Mammary epithelial cell (primary cell): ENCODE measurements at regions of chr22 and their contacts with region 1.

Region 1: GRCh38 chr22:41403532-41404318 is 22.0 kb downstream of the TEF start:
- DNase-seq: peak; percentile 81
- H3K4me3 ChIP-seq: no peak overlapping the region
- H3K27ac ChIP-seq: no peak overlapping the region
- H3K4me1 ChIP-seq: peaks cover 5% of the 10 kb centered on the region
- H3K27me3 ChIP-seq: no peaks in the 10 kb centered on the region
- CTCF ChIP-seq: peak; percentile 94 to 96

Region 2: DNA sequence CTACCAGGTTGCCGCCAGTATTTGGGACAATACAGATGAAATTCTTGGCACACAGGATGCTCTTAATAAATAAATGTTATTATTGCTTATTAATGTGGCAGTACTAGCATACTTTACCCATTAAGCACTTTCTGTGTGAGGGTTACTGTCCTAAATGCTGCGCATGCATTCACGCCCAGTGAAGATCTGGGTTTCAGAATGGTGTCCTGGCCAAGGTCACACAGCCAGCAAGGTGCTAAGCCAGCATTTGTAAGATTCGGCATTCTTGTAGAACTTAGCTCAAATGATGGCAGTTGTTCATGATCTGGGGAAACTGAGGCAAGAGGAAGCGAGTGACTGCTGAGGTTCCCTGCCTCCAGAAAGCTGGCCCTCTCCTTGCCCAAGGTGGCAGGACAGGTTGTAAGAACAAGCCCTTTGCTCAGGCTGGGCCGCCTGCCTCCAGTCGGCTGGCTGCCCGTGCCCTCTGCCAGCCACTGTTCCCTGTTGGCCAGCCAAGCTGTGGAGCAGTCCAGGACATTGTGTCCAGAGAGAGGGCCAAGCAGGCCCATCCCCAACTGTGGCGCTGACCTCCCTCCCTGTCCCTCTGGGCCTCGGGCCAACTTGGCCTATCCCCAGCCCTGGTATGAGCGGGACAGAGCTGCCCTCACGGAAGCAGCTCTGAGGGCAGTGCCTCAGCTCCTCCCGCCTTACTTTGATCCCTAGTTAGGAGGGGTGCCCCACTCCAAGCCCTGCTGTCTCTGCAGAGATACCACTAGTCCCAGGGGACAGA is 14.1 kb after region 1 on chr22:
- CTCF ChIA-PET with region 1: no interaction called
- dilution Hi-C with region 1: no loop called
- in situ Hi-C with region 1: no loop called
- intact Hi-C with region 1: no loop called
- DNase-seq: no peak
- H3K4me3 ChIP-seq: no peak overlapping the region
- H3K27ac ChIP-seq: no peak overlapping the region
- H3K4me1 ChIP-seq: peaks cover 15% of the 10 kb centered on the region
- H3K27me3 ChIP-seq: no peaks in the 10 kb centered on the region
- CTCF ChIP-seq: no peak

Region 3: GRCh38 chr22:41458161-41458728 is 54.5 kb after region 1 on chr22:
- CTCF ChIA-PET with region 1: no interaction called
- dilution Hi-C with region 1: no loop called
- in situ Hi-C with region 1: no loop called
- intact Hi-C with region 1: no loop called
- DNase-seq: no peak
- H3K4me3 ChIP-seq: no peak overlapping the region
- H3K27ac ChIP-seq: no peak overlapping the region
- H3K4me1 ChIP-seq: no peaks in the 10 kb centered on the region
- H3K27me3 ChIP-seq: no peaks in the 10 kb centered on the region
- CTCF ChIP-seq: no peak

Region 4: GRCh38 chr22:41501209-41501608 is 97.5 kb after region 1 on chr22:
- CTCF ChIA-PET with region 1: no interaction called
- dilution Hi-C with region 1: no loop called
- in situ Hi-C with region 1: no loop called
- intact Hi-C with region 1: loop called (anchors 1 kb)
- DNase-seq: no peak
- H3K4me3 ChIP-seq: no peak overlapping the region
- H3K27ac ChIP-seq: no peak overlapping the region
- H3K4me1 ChIP-seq: peaks cover 4% of the 10 kb centered on the region
- H3K27me3 ChIP-seq: no peaks in the 10 kb centered on the region
- CTCF ChIP-seq: peak in 1 of 2 donors; percentile 38

Region 5: DNA sequence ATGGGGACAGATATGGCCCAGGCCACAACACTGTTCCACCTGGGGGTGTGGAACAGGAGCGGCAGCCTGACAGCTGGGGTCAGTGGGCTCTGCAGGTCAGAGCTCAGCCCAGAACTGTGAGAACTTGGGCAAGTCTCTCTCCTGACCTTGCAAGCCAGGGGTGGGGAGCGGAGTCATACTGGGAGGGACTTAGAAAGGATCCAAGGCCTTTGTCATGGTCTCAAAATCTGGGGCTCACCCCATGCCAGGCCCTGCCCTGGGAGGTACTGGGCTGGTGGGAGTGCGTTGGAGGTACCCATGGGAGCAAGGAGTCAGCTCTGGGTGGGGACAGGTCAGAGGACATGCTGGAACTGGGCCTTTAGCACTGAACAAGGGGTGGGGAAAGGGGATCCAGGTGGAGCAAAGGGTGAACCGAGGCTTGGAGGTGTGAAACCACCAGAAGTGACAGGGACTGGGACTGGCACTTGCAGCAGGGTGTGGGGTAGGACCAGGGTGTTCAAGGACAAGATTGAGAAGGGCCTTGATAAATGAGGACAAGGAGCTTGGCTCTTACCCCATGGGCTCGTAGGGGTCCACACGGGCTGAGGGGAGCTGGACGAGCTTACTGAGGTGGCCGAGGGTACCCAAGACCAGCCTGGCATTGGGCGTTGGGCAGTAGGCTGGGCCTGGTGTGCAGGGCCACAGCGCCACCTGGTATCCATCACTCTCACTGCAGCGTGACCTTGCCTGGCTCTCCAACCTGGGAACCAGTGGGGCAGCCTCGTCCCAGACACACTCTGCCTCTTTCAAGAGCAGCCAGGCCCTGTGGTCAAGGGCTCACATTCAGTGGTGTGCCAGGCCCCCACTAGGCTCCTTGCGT is 193.3 kb after region 1 on chr22:
- CTCF ChIA-PET with region 1: no interaction called
- dilution Hi-C with region 1: no loop called
- in situ Hi-C with region 1: no loop called
- intact Hi-C with region 1: loop called (anchors 1 kb)
- DNase-seq: peak; percentile 66
- H3K4me3 ChIP-seq: no peak overlapping the region
- H3K27ac ChIP-seq: peak overlapping the region; percentile 75
- H3K4me1 ChIP-seq: peaks cover 31% of the 10 kb centered on the region
- H3K27me3 ChIP-seq: no peaks in the 10 kb centered on the region
- CTCF ChIP-seq: peak; percentile 81 to 97